Activated CD8-positive, alpha-beta T cell treated with anti-CD3 and anti-CD28 coated beads for 36 hours (primary cell): ENCODE measurements at regions of chr6 and their contacts with region 1.

Region 1: GRCh38 chr6:87139236-87139635 is 16.1 kb upstream of the ZNF292 start:
- DNase-seq: peak; percentile 36
- ATAC-seq: peak; percentile 80
- H3K4me3 Mint-ChIP-seq: no peak overlapping the region
- H3K27ac Mint-ChIP-seq: no peak overlapping the region
- H3K4me1 Mint-ChIP-seq: peaks cover 2% of the 10 kb centered on the region
- H3K27me3 Mint-ChIP-seq: peaks cover 5% of the 10 kb centered on the region
- CTCF ChIP-seq: peak; percentile 89

Region 2: DNA sequence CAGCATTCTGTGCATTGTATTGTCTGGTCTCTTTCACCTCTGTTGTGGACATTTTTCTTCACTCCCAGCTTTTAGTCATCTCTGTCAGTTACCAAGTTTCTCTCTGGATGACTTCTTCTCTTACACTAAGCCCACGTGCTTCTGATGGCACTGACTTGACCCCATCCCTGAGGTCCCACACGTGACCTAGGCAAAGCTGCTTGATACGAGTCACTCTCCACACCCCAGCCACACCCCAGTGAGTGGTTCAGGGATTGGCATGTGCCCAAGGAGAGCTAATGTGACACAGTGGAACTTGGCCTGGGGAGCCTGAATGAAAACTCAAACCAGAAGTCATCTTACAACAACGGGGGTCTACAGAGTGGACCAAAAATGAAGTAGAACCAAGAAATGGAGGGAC is 169.7 kb before region 1 on chr6:
- CTCF ChIA-PET with region 1: no interaction called
- POLR2A ChIA-PET with region 1: no interaction called
- intact Hi-C with region 1: no loop called
- DNase-seq: no peak
- ATAC-seq: no peak
- H3K4me3 Mint-ChIP-seq: no peak overlapping the region
- H3K27ac Mint-ChIP-seq: no peak overlapping the region
- H3K4me1 Mint-ChIP-seq: no peaks in the 10 kb centered on the region
- H3K27me3 Mint-ChIP-seq: no peaks in the 10 kb centered on the region
- CTCF ChIP-seq: no peak

Region 3: GRCh38 chr6:87012035-87012434 is 127.2 kb before region 1 on chr6:
- CTCF ChIA-PET with region 1: no interaction called
- POLR2A ChIA-PET with region 1: no interaction called
- intact Hi-C with region 1: no loop called
- DNase-seq: no peak
- ATAC-seq: no peak
- H3K4me3 Mint-ChIP-seq: no peak overlapping the region
- H3K27ac Mint-ChIP-seq: no peak overlapping the region
- H3K4me1 Mint-ChIP-seq: no peaks in the 10 kb centered on the region
- H3K27me3 Mint-ChIP-seq: no peaks in the 10 kb centered on the region
- CTCF ChIP-seq: no peak

Region 4: GRCh38 chr6:87182321-87182720 is 43.1 kb after region 1 on chr6:
- CTCF ChIA-PET with region 1: no interaction called
- POLR2A ChIA-PET with region 1: no interaction called
- intact Hi-C with region 1: no loop called
- DNase-seq: peak; percentile 50
- ATAC-seq: peak; percentile 74
- H3K4me3 Mint-ChIP-seq: peak overlapping the region; percentile 51
- H3K27ac Mint-ChIP-seq: peak overlapping the region; percentile 88
- H3K4me1 Mint-ChIP-seq: peaks cover 78% of the 10 kb centered on the region
- H3K27me3 Mint-ChIP-seq: no peaks in the 10 kb centered on the region
- CTCF ChIP-seq: no peak

Region 5: DNA sequence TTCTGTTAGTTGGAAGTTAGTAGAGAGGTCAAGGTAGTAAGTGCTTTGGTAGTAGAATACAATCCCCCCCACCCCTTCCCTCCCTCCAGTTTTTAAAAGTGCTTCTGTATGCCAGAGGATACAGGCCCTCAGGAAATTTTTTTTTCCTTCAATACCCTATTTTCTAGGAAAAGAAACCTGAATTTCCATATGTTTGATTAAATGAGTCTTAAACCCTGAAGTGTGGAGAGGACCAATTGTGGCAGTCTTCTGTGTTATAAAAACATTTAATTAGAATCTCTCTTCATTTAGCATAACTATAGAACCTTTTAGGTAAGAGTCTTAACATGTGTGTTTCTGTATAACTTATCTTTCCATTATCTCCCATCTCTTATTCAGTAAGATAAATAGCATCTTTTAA is 75.6 kb after region 1 on chr6:
- CTCF ChIA-PET with region 1: interaction called, 10 read pairs
- POLR2A ChIA-PET with region 1: no interaction called
- intact Hi-C with region 1: no loop called
- DNase-seq: no peak
- ATAC-seq: no peak
- H3K4me3 Mint-ChIP-seq: no peak overlapping the region
- H3K27ac Mint-ChIP-seq: no peak overlapping the region
- H3K4me1 Mint-ChIP-seq: peaks cover 43% of the 10 kb centered on the region
- H3K27me3 Mint-ChIP-seq: no peaks in the 10 kb centered on the region
- CTCF ChIP-seq: no peak

Region 6: GRCh38 chr6:87237804-87238203 is 98.6 kb after region 1 on chr6:
- CTCF ChIA-PET with region 1: interaction called, 9 read pairs
- POLR2A ChIA-PET with region 1: no interaction called
- intact Hi-C with region 1: loop called (anchors 5 kb)
- DNase-seq: no peak
- ATAC-seq: peak; percentile 61
- H3K4me3 Mint-ChIP-seq: no peak overlapping the region
- H3K27ac Mint-ChIP-seq: no peak overlapping the region
- H3K4me1 Mint-ChIP-seq: peaks cover 8% of the 10 kb centered on the region
- H3K27me3 Mint-ChIP-seq: no peaks in the 10 kb centered on the region
- CTCF ChIP-seq: peak; percentile 71

Region 7: DNA sequence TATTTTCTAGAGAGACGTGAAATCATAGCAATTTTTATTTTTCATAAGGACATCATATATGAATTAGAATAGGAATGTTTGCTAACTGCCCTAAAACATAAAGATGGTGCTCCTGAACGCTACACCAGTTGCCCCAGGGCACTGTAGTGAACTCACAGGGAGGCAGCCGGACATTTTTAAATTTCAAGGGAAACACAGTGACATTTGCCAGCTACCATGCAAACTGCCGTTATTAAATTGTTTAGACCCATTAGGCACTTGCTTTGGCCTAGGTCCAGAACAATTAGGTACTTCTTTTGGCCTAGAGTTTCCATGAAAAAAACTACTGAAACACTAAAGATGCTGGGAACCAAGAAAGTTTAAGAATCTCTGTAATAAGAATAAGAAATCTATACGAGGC is 243.6 kb after region 1 on chr6:
- CTCF ChIA-PET with region 1: no interaction called
- POLR2A ChIA-PET with region 1: no interaction called
- intact Hi-C with region 1: loop called (anchors 10 kb)
- DNase-seq: no peak
- ATAC-seq: no peak
- H3K4me3 Mint-ChIP-seq: no peak overlapping the region
- H3K27ac Mint-ChIP-seq: no peak overlapping the region
- H3K4me1 Mint-ChIP-seq: peaks cover 3% of the 10 kb centered on the region
- H3K27me3 Mint-ChIP-seq: no peaks in the 10 kb centered on the region
- CTCF ChIP-seq: no peak